Caco-2 (cell line): ENCODE measurements at regions of chr7 and their contacts with region 1.

Region 1: GRCh38 chr7:131753620-131754222 is 197.3 kb upstream of the PODXL start:
- DNase-seq: peak; percentile 59 to 62
- H3K4me3 ChIP-seq: no peak overlapping the region
- H3K4me3 Mint-ChIP-seq: no peak overlapping the region
- H3K27ac Mint-ChIP-seq: no peak overlapping the region
- H3K4me1 ChIP-seq: no peaks in the 10 kb centered on the region
- H3K4me1 Mint-ChIP-seq: no peaks in the 10 kb centered on the region
- H3K27me3 ChIP-seq: no peaks in the 10 kb centered on the region; the same call in 1 of the 2 replicates
- H3K27me3 Mint-ChIP-seq: peaks cover 9% of the 10 kb centered on the region
- CTCF ChIP-seq: peak; percentile 65 to 68

Region 2: GRCh38 chr7:131265227-131265626 is 488.5 kb before region 1 on chr7:
- CTCF ChIA-PET with region 1: no interaction called
- POLR2A ChIA-PET with region 1: no interaction called
- intact Hi-C with region 1: no loop called
- DNase-seq: no peak
- H3K4me3 ChIP-seq: no peak overlapping the region
- H3K4me3 Mint-ChIP-seq: no peak overlapping the region
- H3K27ac Mint-ChIP-seq: no peak overlapping the region
- H3K4me1 ChIP-seq: no peaks in the 10 kb centered on the region
- H3K4me1 Mint-ChIP-seq: no peaks in the 10 kb centered on the region
- H3K27me3 ChIP-seq: no peaks in the 10 kb centered on the region
- H3K27me3 Mint-ChIP-seq: peaks cover 2% of the 10 kb centered on the region
- CTCF ChIP-seq: no peak

Region 3: GRCh38 chr7:131843898-131844331 is 90.2 kb after region 1 on chr7:
- CTCF ChIA-PET with region 1: no interaction called
- POLR2A ChIA-PET with region 1: no interaction called
- intact Hi-C with region 1: loop called (anchors 5 kb)
- DNase-seq: no peak
- H3K4me3 ChIP-seq: no peak overlapping the region
- H3K4me3 Mint-ChIP-seq: no peak overlapping the region
- H3K27ac Mint-ChIP-seq: no peak overlapping the region
- H3K4me1 ChIP-seq: no peaks in the 10 kb centered on the region
- H3K4me1 Mint-ChIP-seq: no peaks in the 10 kb centered on the region
- H3K27me3 ChIP-seq: no peaks in the 10 kb centered on the region
- H3K27me3 Mint-ChIP-seq: peaks cover 12% of the 10 kb centered on the region
- CTCF ChIP-seq: no peak

Region 4: DNA sequence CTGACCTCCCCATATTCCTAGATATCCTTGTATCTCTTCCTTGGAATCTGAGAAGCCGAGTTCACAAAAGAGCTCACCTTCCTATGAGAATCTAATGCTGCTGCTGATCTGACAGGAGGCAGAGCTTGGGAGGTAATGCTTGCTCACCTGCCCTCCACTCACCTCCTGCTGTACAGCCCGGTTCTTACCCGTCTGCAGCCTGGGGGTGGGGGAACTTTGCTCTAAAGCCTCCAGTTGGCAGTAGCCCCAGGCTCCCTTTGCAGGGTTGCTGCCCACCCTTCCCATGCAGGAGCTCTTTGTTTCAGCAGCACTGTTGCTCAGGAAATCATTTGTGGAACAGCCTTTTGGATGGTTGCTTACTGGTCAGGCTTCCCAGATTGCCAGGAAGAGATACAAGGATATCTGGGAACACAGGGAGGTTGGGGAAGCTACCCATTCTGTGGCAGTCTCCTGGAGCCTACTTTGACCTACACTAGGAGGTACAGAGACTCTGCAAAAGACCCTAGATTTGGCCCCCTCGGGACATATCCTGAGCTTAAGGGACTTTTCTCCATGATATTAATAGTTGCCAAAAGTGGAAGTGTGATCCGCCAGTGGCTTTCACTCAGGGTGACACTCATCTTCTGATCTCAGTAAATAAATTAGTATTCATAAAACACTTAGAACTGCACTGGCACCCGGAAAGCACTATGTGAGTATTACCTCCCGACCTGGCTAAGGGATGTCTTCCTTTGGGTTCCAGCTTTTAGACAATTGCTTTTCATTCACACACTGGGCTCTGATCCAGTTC is 166.4 kb after region 1 on chr7:
- CTCF ChIA-PET with region 1: no interaction called
- POLR2A ChIA-PET with region 1: no interaction called
- intact Hi-C with region 1: no loop called
- DNase-seq: no peak
- H3K4me3 ChIP-seq: no peak overlapping the region
- H3K4me3 Mint-ChIP-seq: no peak overlapping the region
- H3K27ac Mint-ChIP-seq: no peak overlapping the region
- H3K4me1 ChIP-seq: no peaks in the 10 kb centered on the region
- H3K4me1 Mint-ChIP-seq: no peaks in the 10 kb centered on the region
- H3K27me3 ChIP-seq: no peaks in the 10 kb centered on the region
- H3K27me3 Mint-ChIP-seq: peaks cover 36% of the 10 kb centered on the region
- CTCF ChIP-seq: no peak